ENCODE measurements at regions of chr15 and their contacts with region 1.

Region 1: DNA sequence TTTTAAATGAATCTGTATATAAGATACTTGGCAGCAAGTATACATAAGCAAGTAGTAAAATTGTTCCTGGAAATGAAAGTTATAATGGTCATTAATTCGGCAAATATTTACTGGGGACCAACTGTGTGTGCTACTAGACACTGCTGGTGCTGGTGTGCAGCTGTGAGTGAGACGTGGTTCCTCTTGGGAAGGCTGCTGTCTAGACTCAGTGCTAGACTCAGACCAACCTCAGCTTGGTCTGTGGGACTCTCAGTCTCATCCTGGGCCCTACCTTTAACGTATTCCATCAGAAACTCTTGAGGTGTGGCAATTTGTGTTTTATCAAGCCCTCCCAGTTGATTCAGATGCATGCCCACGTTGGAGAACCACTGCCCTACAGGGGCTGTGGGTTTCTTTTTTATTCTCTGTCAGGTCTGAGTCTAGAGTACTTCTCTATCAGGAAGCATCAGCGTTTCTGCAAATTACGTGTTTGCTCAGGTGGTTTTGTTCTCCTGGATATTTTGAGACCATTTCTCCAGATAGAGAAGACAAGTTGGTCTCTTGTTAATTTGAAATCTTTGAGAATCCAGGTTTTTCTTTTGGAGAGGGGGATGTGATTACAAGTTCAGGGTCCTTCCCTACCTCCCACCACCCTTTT is 6.8 kb downstream of the TLNRD1 start:
- DNase-seq: no peak
- ATAC-seq: no peak
- H3K4me3 Mint-ChIP-seq: no peak overlapping the region
- H3K27ac Mint-ChIP-seq: no peak overlapping the region
- H3K4me1 Mint-ChIP-seq: peaks cover 59% of the 10 kb centered on the region
- H3K27me3 Mint-ChIP-seq: no peaks in the 10 kb centered on the region
- CTCF ChIP-seq: no peak

Region 2: DNA sequence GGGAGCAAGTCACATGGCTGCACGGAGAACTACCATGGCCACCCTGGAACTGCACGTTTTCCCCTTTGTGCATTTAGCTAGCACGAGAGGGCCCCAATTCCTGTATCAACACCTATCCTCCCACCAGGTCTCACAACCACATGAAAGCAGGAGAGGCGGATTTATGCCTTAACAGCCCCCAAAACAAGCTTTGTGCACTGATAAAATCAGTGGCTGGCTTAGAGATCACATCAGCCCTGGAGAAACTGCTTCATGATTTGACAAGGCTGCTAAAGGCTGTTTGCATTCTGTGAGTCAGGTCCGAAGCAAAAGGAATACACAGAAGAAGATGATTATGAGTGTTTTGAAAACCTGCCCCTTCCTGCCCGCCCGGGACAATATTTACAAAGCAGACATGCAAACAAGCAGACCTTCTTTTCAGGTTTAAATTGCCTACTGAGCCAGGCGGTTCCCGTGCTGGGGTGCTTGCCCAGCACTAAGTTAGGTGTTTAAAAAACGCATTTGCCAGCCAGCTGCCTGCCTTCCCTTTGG is 202.5 kb before region 1 on chr15:
- CTCF ChIA-PET with region 1: no interaction called
- POLR2A ChIA-PET with region 1: no interaction called
- intact Hi-C with region 1: no loop called
- DNase-seq: peak; percentile 49
- ATAC-seq: peak; percentile 48
- H3K4me3 Mint-ChIP-seq: no peak overlapping the region
- H3K27ac Mint-ChIP-seq: peak overlapping the region; percentile 4
- H3K4me1 Mint-ChIP-seq: peaks cover 25% of the 10 kb centered on the region
- H3K27me3 Mint-ChIP-seq: no peaks in the 10 kb centered on the region
- CTCF ChIP-seq: no peak

Region 3: DNA sequence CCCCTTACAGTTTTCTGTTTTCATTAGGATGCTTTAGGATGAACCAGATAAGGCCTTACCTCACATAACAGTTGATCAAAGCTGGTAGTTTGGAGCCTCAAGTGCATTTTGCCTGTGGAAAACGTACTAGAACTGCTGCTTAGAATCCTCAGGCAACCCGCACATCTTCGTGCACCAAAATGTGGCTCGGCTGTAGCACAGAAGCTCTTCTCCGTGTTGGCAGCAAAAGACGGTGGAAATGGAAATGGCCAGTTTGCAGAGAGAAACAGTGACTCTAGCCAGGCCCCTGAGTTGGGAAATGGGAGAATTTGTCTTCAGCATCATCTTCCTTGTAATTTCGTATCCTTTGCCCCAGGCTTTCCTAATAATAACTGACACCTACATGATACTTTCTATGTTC is 13.8 kb after region 1 on chr15:
- CTCF ChIA-PET with region 1: interaction called, 10 read pairs
- POLR2A ChIA-PET with region 1: interaction called, 4 read pairs
- intact Hi-C with region 1: no loop called
- DNase-seq: no peak
- ATAC-seq: no peak
- H3K4me3 Mint-ChIP-seq: no peak overlapping the region
- H3K27ac Mint-ChIP-seq: no peak overlapping the region
- H3K4me1 Mint-ChIP-seq: peaks cover 24% of the 10 kb centered on the region
- H3K27me3 Mint-ChIP-seq: no peaks in the 10 kb centered on the region
- CTCF ChIP-seq: no peak

Region 4: GRCh38 chr15:81054236-81054635 is 46.7 kb after region 1 on chr15:
- CTCF ChIA-PET with region 1: no interaction called
- POLR2A ChIA-PET with region 1: no interaction called
- intact Hi-C with region 1: no loop called
- DNase-seq: no peak
- ATAC-seq: no peak
- H3K4me3 Mint-ChIP-seq: no peak overlapping the region
- H3K27ac Mint-ChIP-seq: no peak overlapping the region
- H3K4me1 Mint-ChIP-seq: no peaks in the 10 kb centered on the region
- H3K27me3 Mint-ChIP-seq: no peaks in the 10 kb centered on the region
- CTCF ChIP-seq: no peak